ENCODE measurements at regions of chr9 and their contacts with region 1.

Region 1: GRCh38 chr9:69891696-69892095 is 71.1 kb downstream of the CFAP95 start:
- DNase-seq: no peak
- ATAC-seq: no peak
- H3K4me3 Mint-ChIP-seq: no peak overlapping the region
- H3K27ac Mint-ChIP-seq: no peak overlapping the region
- H3K4me1 Mint-ChIP-seq: peaks cover 3% of the 10 kb centered on the region
- H3K27me3 Mint-ChIP-seq: peaks cover 2% of the 10 kb centered on the region

Region 2: DNA sequence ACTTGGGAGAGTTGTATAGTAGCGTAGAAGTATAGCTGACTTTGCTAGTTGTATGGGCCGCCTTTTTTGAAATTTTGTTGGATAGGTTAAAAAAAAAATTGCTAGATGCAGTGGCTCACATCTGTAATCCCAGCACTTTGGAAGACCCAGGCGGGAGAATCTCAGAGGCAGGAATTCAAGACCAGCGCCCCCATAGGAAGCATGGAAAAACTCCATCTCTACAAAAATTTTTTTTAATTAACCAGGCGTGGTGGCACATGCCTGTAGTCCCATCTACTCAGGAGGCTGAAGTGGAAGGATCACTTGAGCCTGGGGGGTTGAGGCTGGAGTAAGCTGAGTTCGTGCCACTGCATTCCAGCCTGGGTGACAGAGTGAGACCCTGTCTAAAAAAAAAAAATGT is 426.3 kb after region 1 on chr9:
- CTCF ChIA-PET with region 1: no interaction called
- POLR2A ChIA-PET with region 1: no interaction called
- intact Hi-C with region 1: loop called in 1 of 2 experiments (anchors 5 kb)
- DNase-seq: no peak
- ATAC-seq: no peak
- H3K4me3 Mint-ChIP-seq: no peak overlapping the region
- H3K27ac Mint-ChIP-seq: no peak overlapping the region
- H3K4me1 Mint-ChIP-seq: peaks cover 3% of the 10 kb centered on the region
- H3K27me3 Mint-ChIP-seq: no peaks in the 10 kb centered on the region

Measured in activated CD4-positive, alpha-beta T cell treated with anti-CD3 and anti-CD28 coated beads for 36 hours (primary cell).